A549 (cell line): ENCODE measurements at regions of chr2 and their contacts with region 1.

Region 1: GRCh38 chr2:28566521-28567041 is 70.7 kb downstream of the PLB1 start:
- DNase-seq: peak; percentile 87 to 92
- ATAC-seq: peak; percentile 97 to 98
- H3K4me3 ChIP-seq: peak overlapping the region; percentile 46
- H3K27ac ChIP-seq: peak overlapping the region; percentile 77 to 89
- H3K4me1 ChIP-seq: peaks cover 22% of the 10 kb centered on the region
- CTCF ChIP-seq: peak; percentile 100
- EP300 ChIP-seq: no peak
- POLR2A ChIP-seq: 0 out of 2 replicates have a peak, but pooled peaks have one; percentile 19
- RAD21 ChIP-seq: peak; percentile 93 to 100

Region 2: GRCh38 chr2:28338046-28338817 is 228.3 kb before region 1 on chr2:
- CTCF ChIA-PET with region 1: no interaction called
- POLR2A ChIA-PET with region 1: no interaction called
- DNase-seq: no peak
- ATAC-seq: peak in 1 of 2 experiments; percentile 8; a peak in 1 of 6 replicates
- H3K4me3 ChIP-seq: no peak overlapping the region
- H3K27ac ChIP-seq: peak overlapping the region; percentile 25 to 88; a peak in 4 of 6 replicates
- H3K4me1 ChIP-seq: peaks cover 30% of the 10 kb centered on the region
- CTCF ChIP-seq: no peak
- EP300 ChIP-seq: no peak
- POLR2A ChIP-seq: no peak
- RAD21 ChIP-seq: no peak

Region 3: GRCh38 chr2:28543159-28544035 is 23.2 kb before region 1 on chr2:
- CTCF ChIA-PET with region 1: interaction called, 12 read pairs
- POLR2A ChIA-PET with region 1: no interaction called
- DNase-seq: no peak
- ATAC-seq: no peak
- H3K4me3 ChIP-seq: no peak overlapping the region
- H3K27ac ChIP-seq: no peak overlapping the region
- H3K4me1 ChIP-seq: no peaks in the 10 kb centered on the region
- CTCF ChIP-seq: no peak
- EP300 ChIP-seq: no peak
- POLR2A ChIP-seq: no peak
- RAD21 ChIP-seq: no peak

Region 4: GRCh38 chr2:28610583-28611201 is 44.1 kb after region 1 on chr2:
- CTCF ChIA-PET with region 1: interaction called, 88 read pairs
- POLR2A ChIA-PET with region 1: interaction called, 3 read pairs
- DNase-seq: peak; percentile 84 to 95
- ATAC-seq: peak; percentile 95
- H3K4me3 ChIP-seq: no peak overlapping the region
- H3K27ac ChIP-seq: peak overlapping the region; percentile 69 to 82
- H3K4me1 ChIP-seq: peaks cover 19% of the 10 kb centered on the region
- CTCF ChIP-seq: no peak
- EP300 ChIP-seq: peak in 1 of 2 experiments; percentile 33; a peak in 1 of 5 replicates
- POLR2A ChIP-seq: no peak
- RAD21 ChIP-seq: peak in 1 of 2 experiments; percentile 32; a peak in 1 of 5 replicates

Region 5: GRCh38 chr2:28665041-28665704 is 98.6 kb after region 1 on chr2:
- CTCF ChIA-PET with region 1: interaction called, 11 read pairs
- POLR2A ChIA-PET with region 1: no interaction called
- DNase-seq: no peak
- ATAC-seq: no peak
- H3K4me3 ChIP-seq: no peak overlapping the region
- H3K27ac ChIP-seq: no peak overlapping the region; a peak in 1 of 6 replicates
- H3K4me1 ChIP-seq: peaks cover 33% of the 10 kb centered on the region
- CTCF ChIP-seq: no peak
- EP300 ChIP-seq: no peak
- POLR2A ChIP-seq: no peak
- RAD21 ChIP-seq: no peak

Region 6: DNA sequence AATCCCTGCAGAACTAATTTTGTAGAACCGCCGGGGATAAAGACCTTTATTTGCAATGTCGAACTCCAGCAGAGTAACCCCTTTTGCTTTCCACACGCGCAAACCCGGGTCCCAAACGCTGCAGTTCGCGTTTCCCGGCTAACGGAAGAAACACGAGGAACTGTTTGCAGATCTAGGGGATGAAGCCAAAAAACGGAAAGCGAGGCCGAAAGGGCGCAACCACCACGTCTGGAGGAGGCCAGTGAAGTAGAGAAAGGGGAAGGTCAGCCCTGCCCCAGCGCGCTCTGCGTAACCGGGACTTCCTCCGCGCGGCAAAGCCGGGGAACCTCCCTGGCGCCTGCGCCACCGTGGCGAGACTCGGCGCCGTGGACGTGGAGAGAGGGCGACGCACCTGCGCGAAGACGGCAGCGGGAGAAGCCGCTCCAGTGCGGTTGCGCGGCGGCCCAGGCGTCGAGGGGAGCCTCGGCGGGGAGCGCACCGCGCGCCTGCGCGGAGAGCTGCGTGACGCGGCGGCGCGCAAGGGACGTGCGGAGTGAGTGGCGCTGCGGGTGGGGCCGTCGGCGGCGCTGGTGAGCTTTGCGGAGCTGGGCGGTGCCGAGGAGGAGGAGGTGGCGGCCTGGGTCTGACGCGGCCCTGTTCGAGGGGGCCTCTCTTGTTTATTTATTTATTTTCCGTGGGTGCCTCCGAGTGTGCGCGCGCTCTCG is 184.8 kb after region 1 on chr2 and contains the start of gene PPP1CB:
- CTCF ChIA-PET with region 1: interaction called, 89 read pairs
- POLR2A ChIA-PET with region 1: interaction called, 14 read pairs
- DNase-seq: peak; percentile 88 to 98
- ATAC-seq: peak; percentile 89 to 91
- H3K4me3 ChIP-seq: peak within 1 kb of the TSS; percentile 91
- H3K27ac ChIP-seq: peak within 1 kb of the TSS; percentile 98 to 99
- H3K4me1 ChIP-seq: peaks cover 35% of the 10 kb centered on the region
- CTCF ChIP-seq: peak; percentile 29; the same call in 2 of the 3 replicates
- EP300 ChIP-seq: no peak
- POLR2A ChIP-seq: peak; percentile 95
- RAD21 ChIP-seq: peak in 1 of 2 experiments; percentile 19; a peak in 2 of 5 replicates
- polyA plus RNA-seq, gene PPP1CB: 119 and 188 TPM in 2 replicates

Region 7: GRCh38 chr2:28810384-28811285 is 244.1 kb after region 1 on chr2 and contains the start of gene SPDYA:
- CTCF ChIA-PET with region 1: interaction called, 12 read pairs
- POLR2A ChIA-PET with region 1: interaction called, 3 read pairs
- DNase-seq: peak; percentile 68 to 81
- ATAC-seq: peak; percentile 94 to 95
- H3K4me3 ChIP-seq: peak within 1 kb of the TSS; percentile 43
- H3K27ac ChIP-seq: peak within 1 kb of the TSS; percentile 74 to 85
- H3K4me1 ChIP-seq: peaks cover 11% of the 10 kb centered on the region; the same call in 2 of the 3 replicates
- CTCF ChIP-seq: no peak
- EP300 ChIP-seq: no peak
- POLR2A ChIP-seq: 0 out of 2 replicates have a peak, but pooled peaks have one; percentile 7
- RAD21 ChIP-seq: no peak
- polyA plus RNA-seq, gene SPDYA: 0.17 and 0.49 TPM in 2 replicates